ENCODE measurements at regions of chr14 and their contacts with region 1.

Region 1: GRCh38 chr14:75176142-75176820 is at the start of gene TMED10:
- DNase-seq: peak; percentile 97
- ATAC-seq: peak; percentile 74
- H3K4me3 ChIP-seq: peak within 1 kb of the TSS; percentile 82 to 99 (median 91)
- H3K4me3 Mint-ChIP-seq: peak within 1 kb of the TSS; percentile 92
- H3K27ac ChIP-seq: peak within 1 kb of the TSS; percentile 97 to 99
- H3K27ac Mint-ChIP-seq: peak within 1 kb of the TSS; percentile 97
- H3K4me1 ChIP-seq: peaks cover 17 to 22% of the 10 kb centered on the region in 2 donors
- H3K4me1 Mint-ChIP-seq: peaks cover 32% of the 10 kb centered on the region
- H3K27me3 ChIP-seq: no peaks in the 10 kb centered on the region
- H3K27me3 Mint-ChIP-seq: no peaks in the 10 kb centered on the region
- CTCF ChIP-seq: no peak
- total RNA-seq, gene TMED10: 111 and 119 TPM in 2 replicates

Region 2: GRCh38 chr14:75141967-75142366 is 34.3 kb before region 1 on chr14:
- CTCF ChIA-PET with region 1: no interaction called
- POLR2A ChIA-PET with region 1: interaction called, 4 read pairs
- intact Hi-C with region 1: loop called (anchors 2 kb)
- DNase-seq: peak; percentile 43
- ATAC-seq: no peak
- H3K4me3 ChIP-seq: no peak overlapping the region
- H3K4me3 Mint-ChIP-seq: no peak overlapping the region
- H3K27ac ChIP-seq: peak overlapping the region in 1 of 2 donors; percentile 56
- H3K27ac Mint-ChIP-seq: peak overlapping the region; percentile 23
- H3K4me1 ChIP-seq: peaks cover 33 to 45% of the 10 kb centered on the region in 2 donors
- H3K4me1 Mint-ChIP-seq: peaks cover 49% of the 10 kb centered on the region
- H3K27me3 ChIP-seq: no peaks in the 10 kb centered on the region
- H3K27me3 Mint-ChIP-seq: no peaks in the 10 kb centered on the region
- CTCF ChIP-seq: peak; percentile 45

Region 3: DNA sequence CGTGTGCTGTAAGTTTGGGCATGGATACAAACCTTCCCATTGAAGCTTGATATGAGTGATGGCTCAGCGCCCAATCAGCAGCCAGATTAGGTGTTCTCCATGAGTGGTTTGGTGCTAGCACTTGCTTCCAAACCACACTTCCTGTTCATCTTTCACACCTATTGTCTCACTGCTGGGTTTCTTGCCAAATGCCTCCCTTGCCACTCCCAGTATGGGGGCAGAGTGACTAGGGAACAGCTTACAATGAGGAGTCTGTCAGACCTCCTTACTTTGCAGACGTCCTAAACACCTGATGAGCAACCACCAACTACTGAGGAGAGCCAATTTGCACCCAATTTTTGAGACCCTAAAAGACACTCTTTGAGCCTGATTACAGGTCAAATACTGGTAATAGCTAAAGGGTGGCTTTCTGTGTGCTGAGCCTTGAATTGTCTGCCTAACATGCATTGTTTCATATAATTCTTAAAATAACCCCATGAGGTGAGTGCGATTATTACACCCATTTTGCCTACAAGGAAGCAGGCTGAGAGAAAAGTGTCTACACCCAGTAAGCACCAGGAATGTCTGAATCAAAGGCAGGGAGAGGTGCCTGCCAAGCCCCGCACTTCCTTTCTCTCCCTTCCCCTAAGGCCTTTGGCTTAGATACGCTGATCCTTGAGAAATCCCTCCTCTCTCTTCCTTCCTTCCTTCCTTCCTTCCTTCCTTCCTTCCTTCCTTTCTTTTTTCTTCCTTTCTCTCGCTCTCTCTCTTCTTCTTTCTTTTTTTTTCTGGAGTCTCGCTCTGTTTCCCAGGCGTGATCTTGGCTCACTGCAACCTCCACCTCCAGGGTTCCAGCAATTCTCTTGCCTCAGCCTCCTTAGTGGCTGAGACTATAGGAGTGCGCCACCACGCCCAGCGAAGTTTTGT is 54.1 kb after region 1 on chr14:
- CTCF ChIA-PET with region 1: no interaction called
- POLR2A ChIA-PET with region 1: no interaction called
- intact Hi-C with region 1: no loop called
- DNase-seq: peak; percentile 71
- ATAC-seq: peak; percentile 77
- H3K4me3 ChIP-seq: no peak overlapping the region
- H3K4me3 Mint-ChIP-seq: peak overlapping the region; percentile 48
- H3K27ac ChIP-seq: peak overlapping the region; percentile 4 to 20
- H3K27ac Mint-ChIP-seq: peak overlapping the region; percentile 17
- H3K4me1 ChIP-seq: peaks cover 28 to 35% of the 10 kb centered on the region in 2 donors
- H3K4me1 Mint-ChIP-seq: peaks cover 37% of the 10 kb centered on the region
- H3K27me3 ChIP-seq: no peaks in the 10 kb centered on the region
- H3K27me3 Mint-ChIP-seq: no peaks in the 10 kb centered on the region
- CTCF ChIP-seq: peak; percentile 26

Region 4: DNA sequence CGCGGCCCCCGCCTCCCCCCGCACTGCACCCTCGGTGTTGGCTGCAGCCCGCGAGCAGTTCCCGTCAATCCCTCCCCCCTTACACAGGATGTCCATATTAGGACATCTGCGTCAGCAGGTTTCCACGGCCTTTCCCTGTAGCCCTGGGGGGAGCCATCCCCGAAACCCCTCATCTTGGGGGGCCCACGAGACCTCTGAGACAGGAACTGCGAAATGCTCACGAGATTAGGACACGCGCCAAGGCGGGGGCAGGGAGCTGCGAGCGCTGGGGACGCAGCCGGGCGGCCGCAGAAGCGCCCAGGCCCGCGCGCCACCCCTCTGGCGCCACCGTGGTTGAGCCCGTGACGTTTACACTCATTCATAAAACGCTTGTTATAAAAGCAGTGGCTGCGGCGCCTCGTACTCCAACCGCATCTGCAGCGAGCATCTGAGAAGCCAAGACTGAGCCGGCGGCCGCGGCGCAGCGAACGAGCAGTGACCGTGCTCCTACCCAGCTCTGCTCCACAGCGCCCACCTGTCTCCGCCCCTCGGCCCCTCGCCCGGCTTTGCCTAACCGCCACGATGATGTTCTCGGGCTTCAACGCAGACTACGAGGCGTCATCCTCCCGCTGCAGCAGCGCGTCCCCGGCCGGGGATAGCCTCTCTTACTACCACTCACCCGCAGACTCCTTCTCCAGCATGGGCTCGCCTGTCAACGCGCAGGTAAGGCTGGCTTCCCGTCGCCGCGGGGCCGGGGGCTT is 102.3 kb after region 1 on chr14 and contains the start of gene FOS:
- CTCF ChIA-PET with region 1: interaction called, 4 read pairs
- POLR2A ChIA-PET with region 1: no interaction called
- intact Hi-C with region 1: loop called (anchors 1 kb)
- DNase-seq: peak; percentile 99
- ATAC-seq: peak; percentile 63
- H3K4me3 ChIP-seq: peak within 1 kb of the TSS; percentile 61 to 100 (median 95)
- H3K4me3 Mint-ChIP-seq: peak within 1 kb of the TSS; percentile 99
- H3K27ac ChIP-seq: peak within 1 kb of the TSS; percentile 50 to 93
- H3K27ac Mint-ChIP-seq: peak within 1 kb of the TSS; percentile 96
- H3K4me1 ChIP-seq: peaks cover 56 to 58% of the 10 kb centered on the region in 2 donors
- H3K4me1 Mint-ChIP-seq: peaks cover 65% of the 10 kb centered on the region
- H3K27me3 ChIP-seq: peaks cover 0 to 52% (median 28%) of the 10 kb centered on the region in 4 experiments
- H3K27me3 Mint-ChIP-seq: peaks cover 38% of the 10 kb centered on the region
- CTCF ChIP-seq: no peak
- total RNA-seq, gene FOS: 103 and 104 TPM in 2 replicates

Region 5: DNA sequence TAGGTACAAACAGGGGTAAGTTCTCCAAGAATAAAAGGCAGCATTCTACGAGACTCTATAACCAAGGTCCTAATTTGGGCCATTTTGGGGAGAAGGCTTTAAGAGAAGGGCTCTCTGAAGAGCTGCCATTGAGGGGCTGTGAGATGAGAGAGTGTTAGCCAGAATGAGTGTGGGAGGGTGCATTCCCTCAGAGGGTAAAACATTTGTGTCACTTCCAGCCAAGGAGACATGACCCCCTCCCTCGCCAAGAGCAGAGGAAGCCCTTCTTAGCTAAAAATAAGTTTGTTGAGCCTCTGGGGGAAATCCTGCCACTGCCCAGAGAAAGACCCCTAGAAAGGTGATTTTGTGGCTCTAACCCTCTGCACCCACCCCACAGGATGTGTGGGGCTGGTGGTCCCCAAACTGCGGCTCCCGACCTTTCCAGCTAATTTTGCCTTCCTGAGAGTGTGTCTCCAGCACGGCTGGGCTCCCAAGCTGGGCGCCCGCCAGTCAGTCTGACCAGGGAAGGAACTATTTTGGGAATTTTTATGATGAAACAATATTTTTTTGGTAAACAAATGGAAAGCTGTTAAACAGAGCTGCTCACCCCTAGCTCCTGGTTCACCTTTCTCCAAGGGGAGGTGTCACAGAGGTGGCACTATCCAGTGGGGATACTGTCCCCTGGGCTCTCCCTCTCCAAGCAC is 185.6 kb after region 1 on chr14:
- CTCF ChIA-PET with region 1: no interaction called
- POLR2A ChIA-PET with region 1: no interaction called
- intact Hi-C with region 1: no loop called
- DNase-seq: no peak
- ATAC-seq: no peak
- H3K4me3 ChIP-seq: no peak overlapping the region
- H3K4me3 Mint-ChIP-seq: no peak overlapping the region
- H3K27ac ChIP-seq: no peak overlapping the region
- H3K27ac Mint-ChIP-seq: no peak overlapping the region
- H3K4me1 ChIP-seq: no peaks in the 10 kb centered on the region
- H3K4me1 Mint-ChIP-seq: no peaks in the 10 kb centered on the region
- H3K27me3 ChIP-seq: peaks cover 0 to 5% (median 0%) of the 10 kb centered on the region in 4 experiments
- H3K27me3 Mint-ChIP-seq: peaks cover 4% of the 10 kb centered on the region
- CTCF ChIP-seq: no peak

Measured in B cell (primary cell).